ENCODE measurements at regions of chr3 and their contacts with region 1.

Region 1: DNA sequence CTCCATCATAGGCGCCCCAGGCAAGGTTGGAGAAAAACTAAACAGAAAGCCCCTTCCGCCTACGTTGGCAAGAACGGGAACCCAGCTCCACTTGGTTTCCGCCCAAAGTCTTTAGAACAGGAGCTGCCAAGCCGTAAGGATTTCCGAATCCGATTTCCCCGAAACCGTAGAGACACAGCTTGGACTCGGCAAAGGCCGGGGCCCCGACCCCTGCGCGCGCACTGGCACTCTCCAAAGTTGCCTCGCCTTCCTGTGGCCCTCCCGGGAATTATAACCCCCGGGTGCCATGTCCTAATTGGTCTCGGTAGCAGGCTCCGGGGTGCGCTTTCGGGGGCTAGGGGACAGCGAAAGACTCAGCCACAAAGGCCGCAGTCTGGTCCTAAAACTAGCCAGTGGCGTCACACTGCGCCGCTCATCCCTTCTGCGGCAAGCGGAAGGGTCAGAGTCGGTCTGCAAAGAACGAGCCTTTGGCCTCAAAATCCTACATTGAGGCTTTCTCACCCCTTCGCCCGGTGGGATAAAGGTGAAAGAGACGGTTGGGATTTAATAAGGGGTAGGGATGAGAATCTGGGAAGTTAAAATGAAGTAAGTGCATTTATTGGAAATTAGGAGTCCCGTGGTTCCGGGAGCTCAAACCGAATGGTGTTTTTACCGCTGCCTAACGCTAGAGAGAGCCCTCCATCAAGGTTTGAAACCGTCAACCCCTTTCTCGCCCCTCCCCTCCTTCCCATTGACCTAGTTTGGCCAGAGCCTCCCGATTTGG is 6.8 kb downstream of the BCL6 start:
- DNase-seq: peak; percentile 87 to 95 (median 91)
- H3K4me3 ChIP-seq: peak overlapping the region; percentile 88
- H3K27ac ChIP-seq: peak overlapping the region; percentile 84 to 100
- H3K4me1 ChIP-seq: peaks cover 7% of the 10 kb centered on the region
- H3K27me3 ChIP-seq: no peaks in the 10 kb centered on the region
- CTCF ChIP-seq: peak; percentile 43 to 77 (median 61)
- EP300 ChIP-seq: peak; percentile 53
- POLR2A ChIP-seq: peak; percentile 36

Region 2: DNA sequence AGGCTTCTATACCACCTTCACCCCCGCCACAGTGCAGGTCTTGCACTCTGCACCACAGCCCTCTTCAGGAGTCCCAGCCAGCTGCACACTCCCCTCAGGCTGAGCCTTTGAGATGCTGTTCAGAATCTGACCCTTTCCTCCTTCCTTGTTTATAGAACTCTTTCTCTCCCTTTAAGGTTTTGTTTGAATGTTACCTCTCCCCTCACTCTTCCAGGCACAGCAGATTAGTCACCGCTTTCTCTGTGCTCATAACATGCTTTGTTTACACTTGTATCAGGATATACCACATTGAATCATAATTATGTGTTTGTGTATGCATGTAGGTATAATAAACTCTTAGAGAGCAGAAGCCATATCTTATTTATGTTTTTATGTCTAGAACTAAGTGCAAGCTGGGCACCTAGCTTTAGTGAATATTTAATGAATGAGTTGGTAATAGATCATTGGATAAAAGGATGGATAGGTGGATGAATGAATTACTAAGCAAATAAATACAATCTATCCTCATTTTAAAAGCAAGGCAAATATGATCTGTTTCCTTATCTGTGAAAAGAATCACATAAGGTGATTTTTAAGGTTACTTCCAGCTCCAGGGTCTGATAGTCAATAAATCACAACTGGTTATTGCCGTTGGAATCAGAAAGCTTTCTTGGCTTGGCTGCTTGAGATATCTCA is 175.2 kb after region 1 on chr3:
- intact Hi-C with region 1: loop called in 1 of 4 experiments (anchors 5 kb)
- DNase-seq: no peak
- H3K4me3 ChIP-seq: no peak overlapping the region
- H3K27ac ChIP-seq: peak overlapping the region in 1 of 2 donors; percentile 36
- H3K4me1 ChIP-seq: peaks cover 27% of the 10 kb centered on the region
- H3K27me3 ChIP-seq: no peaks in the 10 kb centered on the region
- CTCF ChIP-seq: no peak
- EP300 ChIP-seq: no peak
- POLR2A ChIP-seq: no peak

Region 3: DNA sequence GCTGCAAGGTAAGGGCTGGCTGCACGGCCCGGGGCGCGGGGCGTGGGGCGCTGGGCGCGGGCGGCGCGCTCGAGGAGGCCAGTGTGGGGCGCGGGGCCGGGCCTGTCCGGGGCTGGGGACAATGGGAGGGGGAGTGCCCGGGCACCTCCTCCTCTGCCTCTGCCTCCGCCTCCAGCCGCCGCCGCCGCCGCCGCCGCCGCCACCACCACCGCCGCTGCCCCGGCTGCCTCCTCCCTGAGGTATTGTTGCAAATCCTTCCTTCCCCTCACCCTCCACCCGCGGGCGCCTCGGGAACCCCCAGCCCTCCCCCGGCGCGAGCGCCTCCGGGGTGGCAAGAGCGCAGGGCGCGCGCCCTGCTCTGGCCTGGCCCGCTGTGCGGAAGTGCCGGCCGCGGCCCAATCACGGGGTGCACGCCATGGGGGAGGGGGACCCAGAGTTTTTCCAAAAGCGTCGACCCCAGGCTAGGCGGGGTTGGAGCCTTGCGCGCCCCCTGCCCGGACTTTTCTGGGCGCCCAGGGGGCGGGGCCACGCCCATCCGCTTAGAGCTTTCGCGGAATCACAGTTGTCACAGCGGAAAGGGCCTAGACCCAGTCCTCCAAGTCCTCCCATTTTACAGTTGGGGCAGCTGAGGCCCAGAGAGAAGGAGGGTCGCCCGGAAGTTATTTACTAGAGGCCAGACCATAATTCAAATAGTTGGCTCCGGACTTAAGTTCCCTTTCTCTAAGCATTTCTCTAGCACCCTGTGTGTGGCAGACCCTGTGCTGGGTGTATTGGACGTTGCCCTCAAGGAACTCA is 415.7 kb after region 1 on chr3 and contains the start of gene LPP:
- intact Hi-C with region 1: loop called in 2 of 4 experiments (anchors 5 to 10 kb)
- DNase-seq: peak; percentile 59 to 84 (median 77)
- H3K4me3 ChIP-seq: peak within 1 kb of the TSS; percentile 70
- H3K27ac ChIP-seq: peak within 1 kb of the TSS; percentile 81 to 91
- H3K4me1 ChIP-seq: peaks cover 10% of the 10 kb centered on the region
- H3K27me3 ChIP-seq: no peaks in the 10 kb centered on the region
- CTCF ChIP-seq: peak in 1 of 3 donors; percentile 5
- EP300 ChIP-seq: no peak
- POLR2A ChIP-seq: no peak
- total RNA-seq, gene LPP: 80.6 to 280 (median 165) TPM

Region 4: DNA sequence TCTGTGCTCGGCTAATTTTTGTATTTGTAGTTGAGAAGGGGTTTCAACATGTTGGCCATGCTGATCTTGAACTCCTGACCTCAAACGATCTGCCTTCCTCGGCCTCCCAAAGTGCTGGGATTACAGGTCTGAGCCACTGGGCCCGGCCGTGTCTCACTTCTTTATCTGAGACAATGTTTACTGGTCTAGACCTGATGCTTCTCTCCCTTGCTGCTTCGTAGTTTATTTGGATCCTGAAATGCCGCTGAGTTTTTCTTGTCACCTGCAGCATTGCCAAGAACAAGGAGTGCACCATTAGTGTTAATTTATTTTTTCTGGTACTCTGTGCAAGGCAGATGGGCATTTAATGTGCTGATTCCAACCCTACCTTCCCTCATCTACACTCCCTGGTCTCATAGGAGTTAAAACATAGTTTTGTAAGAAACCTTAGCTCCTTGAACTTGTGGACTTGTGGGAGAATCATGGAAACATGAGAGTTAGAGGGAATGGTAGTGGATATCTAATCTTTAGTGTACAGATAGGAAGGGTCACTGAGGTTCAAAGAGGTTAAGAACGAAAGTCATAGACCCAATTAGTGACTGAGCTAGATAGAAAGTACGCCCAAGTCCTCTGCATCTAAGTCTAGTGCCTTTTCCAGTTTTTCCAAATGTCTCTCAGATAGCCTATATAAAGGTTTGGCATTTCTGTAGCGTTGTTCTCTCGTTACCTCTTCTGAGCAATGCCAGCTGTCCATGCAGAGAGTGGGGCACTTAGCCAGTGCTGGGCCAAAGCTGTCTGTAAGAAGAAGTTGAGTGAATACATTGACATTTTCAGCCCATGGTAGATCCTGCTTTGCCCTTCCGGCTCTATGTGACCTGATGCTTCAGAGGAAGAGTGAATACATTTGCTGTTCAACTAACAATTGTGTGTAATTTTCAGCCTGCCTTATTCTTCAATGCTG is 659.5 kb after region 1 on chr3:
- intact Hi-C with region 1: loop called in 1 of 4 experiments (anchors 5 kb)
- DNase-seq: no peak
- H3K4me3 ChIP-seq: peak overlapping the region; percentile 16
- H3K27ac ChIP-seq: peak overlapping the region in 1 of 2 donors; percentile 55
- H3K4me1 ChIP-seq: peaks cover 14% of the 10 kb centered on the region
- H3K27me3 ChIP-seq: no peaks in the 10 kb centered on the region
- CTCF ChIP-seq: no peak
- EP300 ChIP-seq: no peak
- POLR2A ChIP-seq: no peak

Region 5: DNA sequence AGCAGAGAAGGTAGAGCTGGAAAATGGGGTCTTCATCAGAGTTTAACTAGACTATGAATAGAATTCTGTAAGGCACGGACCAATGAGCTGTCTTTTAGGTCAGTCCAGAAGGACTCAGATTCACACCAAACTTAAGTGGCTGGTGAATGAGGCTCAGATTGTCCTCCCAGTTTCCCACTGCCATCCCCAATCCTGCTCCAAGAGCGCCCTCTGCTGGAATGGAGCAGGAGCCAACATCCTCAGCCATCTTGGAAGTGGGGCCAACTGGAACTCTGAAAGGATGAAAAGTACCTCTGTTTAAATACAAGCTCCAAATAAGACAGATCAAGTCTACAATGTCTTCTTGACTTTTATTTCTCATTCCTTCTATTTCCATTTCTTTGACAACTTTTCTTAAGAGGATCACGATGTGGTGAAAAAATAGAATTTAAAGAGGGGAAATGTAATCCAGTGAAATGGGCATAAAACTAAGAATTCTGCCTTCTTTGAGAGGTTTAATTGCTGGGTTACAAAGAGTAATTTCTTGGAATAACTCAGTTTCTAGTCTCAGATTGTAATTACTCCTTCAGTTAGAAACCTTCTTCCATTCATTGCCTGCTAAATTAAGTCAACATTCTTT is 1216.2 kb after region 1 on chr3:
- intact Hi-C with region 1: loop called in 3 of 4 experiments (anchors 2 to 5 kb)
- DNase-seq: peak; percentile 85 to 92 (median 87)
- H3K4me3 ChIP-seq: no peak overlapping the region
- H3K27ac ChIP-seq: no peak overlapping the region
- H3K4me1 ChIP-seq: peaks cover 8% of the 10 kb centered on the region
- H3K27me3 ChIP-seq: no peaks in the 10 kb centered on the region
- CTCF ChIP-seq: peak; percentile 73 to 96 (median 90)
- EP300 ChIP-seq: no peak
- POLR2A ChIP-seq: no peak

Region 6: DNA sequence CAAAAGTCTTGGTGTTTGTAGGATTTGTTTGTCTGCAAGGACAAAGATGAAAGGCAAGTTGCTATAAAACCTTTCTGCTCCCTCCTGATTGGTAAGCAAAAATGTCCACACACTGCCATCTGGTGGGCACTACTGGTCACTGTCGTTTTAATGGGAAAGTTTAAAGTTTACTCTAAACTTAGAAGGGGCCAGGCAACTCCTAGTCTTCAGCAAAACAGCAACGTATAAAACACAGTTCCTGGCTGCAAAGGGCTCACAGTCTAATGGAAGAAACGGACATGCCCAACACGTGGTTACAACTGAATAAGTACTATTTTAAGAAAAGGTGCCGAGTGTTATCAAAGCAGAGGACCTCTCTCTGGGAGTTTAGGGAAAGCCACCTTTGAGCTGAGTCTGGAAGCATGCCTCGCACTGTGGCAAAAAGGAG is 1409.6 kb after region 1 on chr3:
- intact Hi-C with region 1: loop called in 3 of 4 experiments (anchors 2 to 5 kb)
- DNase-seq: peak; percentile 55 to 83 (median 71)
- H3K4me3 ChIP-seq: no peak overlapping the region
- H3K27ac ChIP-seq: no peak overlapping the region
- H3K4me1 ChIP-seq: peaks cover 4% of the 10 kb centered on the region
- H3K27me3 ChIP-seq: no peaks in the 10 kb centered on the region
- CTCF ChIP-seq: peak; percentile 71 to 90 (median 86)
- EP300 ChIP-seq: no peak
- POLR2A ChIP-seq: no peak

Measured in ovary (tissue), 10 donors.